ENCODE measurements at regions of chr17 and their contacts with region 1.

Region 1: GRCh38 chr17:80169784-80170500 is at the start of gene CARD14:
- DNase-seq: peak; percentile 62
- H3K4me3 ChIP-seq: peak within 1 kb of the TSS in 2 of 3 experiments; percentile 7 to 44
- H3K27ac ChIP-seq: no peak within 1 kb of the TSS
- H3K4me1 ChIP-seq: peaks cover 8% of the 10 kb centered on the region
- H3K27me3 ChIP-seq: no peaks in the 10 kb centered on the region
- CTCF ChIP-seq: no peak
- total RNA-seq, gene CARD14: 0.66 to 3.0 TPM

Region 2: DNA sequence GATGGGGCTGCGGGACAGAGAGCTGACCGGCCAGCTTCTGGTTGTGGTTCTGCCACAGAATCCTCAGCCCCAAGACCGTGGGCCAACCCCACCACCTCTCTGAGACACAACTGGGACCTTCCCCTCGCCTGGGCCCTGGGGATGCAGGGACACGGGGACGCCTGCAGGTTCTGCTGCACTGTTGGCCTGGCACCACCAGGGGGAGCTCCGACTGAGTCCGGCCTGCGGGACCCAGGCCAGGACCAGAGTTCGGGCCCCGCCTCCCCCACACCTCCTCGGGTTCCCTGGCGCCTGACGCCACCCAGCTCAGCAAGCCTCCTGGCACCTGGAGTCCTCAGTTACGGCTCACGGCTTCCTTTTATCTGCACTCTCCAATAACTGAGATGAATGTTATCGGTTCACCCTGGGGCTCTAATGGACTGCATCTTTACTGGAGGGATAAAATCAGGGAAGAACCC is 161.5 kb before region 1 on chr17:
- CTCF ChIA-PET with region 1: no interaction called
- dilution Hi-C with region 1: no loop called
- in situ Hi-C with region 1: no loop called
- intact Hi-C with region 1: no loop called
- DNase-seq: peak; percentile 48
- H3K4me3 ChIP-seq: no peak overlapping the region
- H3K27ac ChIP-seq: no peak overlapping the region
- H3K4me1 ChIP-seq: no peaks in the 10 kb centered on the region
- H3K27me3 ChIP-seq: no peaks in the 10 kb centered on the region
- CTCF ChIP-seq: peak; percentile 94 to 95

Region 3: GRCh38 chr17:80092959-80093358 is 77.0 kb before region 1 on chr17:
- CTCF ChIA-PET with region 1: no interaction called
- dilution Hi-C with region 1: loop called (anchors 5 kb)
- in situ Hi-C with region 1: no loop called
- intact Hi-C with region 1: no loop called
- DNase-seq: no peak
- H3K4me3 ChIP-seq: no peak overlapping the region
- H3K27ac ChIP-seq: no peak overlapping the region
- H3K4me1 ChIP-seq: no peaks in the 10 kb centered on the region
- H3K27me3 ChIP-seq: no peaks in the 10 kb centered on the region
- CTCF ChIP-seq: no peak

Region 4: DNA sequence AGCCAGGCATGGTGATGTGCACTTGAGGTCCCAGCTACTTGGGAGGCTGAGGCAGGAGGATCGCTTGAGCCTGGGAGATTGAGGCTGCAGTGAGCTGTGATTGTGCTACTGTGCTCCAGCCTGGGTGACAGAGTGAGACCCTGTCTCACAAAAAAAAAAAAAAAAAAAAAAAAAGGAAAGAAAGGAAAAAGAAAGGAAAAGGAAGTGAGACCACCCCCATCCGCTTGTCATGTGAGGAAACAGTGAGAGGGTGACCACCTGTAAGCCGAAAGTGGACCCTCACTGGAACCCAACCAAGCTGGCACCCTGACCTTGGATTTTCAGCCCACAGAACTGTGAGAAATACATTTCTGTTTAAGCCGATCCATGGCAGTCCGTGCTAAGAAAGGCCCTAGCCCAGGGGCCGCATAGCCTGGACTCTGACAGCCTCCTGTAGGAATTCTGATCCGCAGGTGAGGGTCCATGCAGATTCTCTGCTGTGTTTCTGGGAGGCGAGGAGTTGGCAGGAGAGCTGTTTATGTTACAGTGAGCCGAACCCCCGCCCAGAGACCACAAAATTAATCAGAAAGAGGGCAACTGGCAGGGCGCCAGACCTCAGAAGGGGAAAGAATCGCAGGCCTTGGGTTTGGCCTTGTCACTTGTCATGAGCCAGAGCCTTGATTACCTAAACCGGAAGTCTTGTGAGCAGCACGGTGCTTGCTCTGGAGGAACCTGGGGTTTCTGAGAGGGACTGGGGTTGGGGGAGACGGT is 49.2 kb after region 1 on chr17:
- CTCF ChIA-PET with region 1: no interaction called
- dilution Hi-C with region 1: loop called (anchors 5 kb)
- in situ Hi-C with region 1: no loop called
- intact Hi-C with region 1: no loop called
- DNase-seq: peak; percentile 82
- H3K4me3 ChIP-seq: peak overlapping the region; percentile 27 to 70 (median 59)
- H3K27ac ChIP-seq: no peak overlapping the region
- H3K4me1 ChIP-seq: peaks cover 12% of the 10 kb centered on the region
- H3K27me3 ChIP-seq: no peaks in the 10 kb centered on the region
- CTCF ChIP-seq: no peak

Region 5: GRCh38 chr17:80270836-80271235 is 100.9 kb after region 1 on chr17:
- CTCF ChIA-PET with region 1: no interaction called
- dilution Hi-C with region 1: loop called (anchors 5 kb)
- in situ Hi-C with region 1: no loop called
- intact Hi-C with region 1: no loop called
- DNase-seq: no peak
- H3K4me3 ChIP-seq: no peak overlapping the region
- H3K27ac ChIP-seq: no peak overlapping the region
- H3K4me1 ChIP-seq: no peaks in the 10 kb centered on the region
- H3K27me3 ChIP-seq: no peaks in the 10 kb centered on the region
- CTCF ChIP-seq: no peak